ENCODE measurements at regions of chr19 and their contacts with region 1.

Region 1: DNA sequence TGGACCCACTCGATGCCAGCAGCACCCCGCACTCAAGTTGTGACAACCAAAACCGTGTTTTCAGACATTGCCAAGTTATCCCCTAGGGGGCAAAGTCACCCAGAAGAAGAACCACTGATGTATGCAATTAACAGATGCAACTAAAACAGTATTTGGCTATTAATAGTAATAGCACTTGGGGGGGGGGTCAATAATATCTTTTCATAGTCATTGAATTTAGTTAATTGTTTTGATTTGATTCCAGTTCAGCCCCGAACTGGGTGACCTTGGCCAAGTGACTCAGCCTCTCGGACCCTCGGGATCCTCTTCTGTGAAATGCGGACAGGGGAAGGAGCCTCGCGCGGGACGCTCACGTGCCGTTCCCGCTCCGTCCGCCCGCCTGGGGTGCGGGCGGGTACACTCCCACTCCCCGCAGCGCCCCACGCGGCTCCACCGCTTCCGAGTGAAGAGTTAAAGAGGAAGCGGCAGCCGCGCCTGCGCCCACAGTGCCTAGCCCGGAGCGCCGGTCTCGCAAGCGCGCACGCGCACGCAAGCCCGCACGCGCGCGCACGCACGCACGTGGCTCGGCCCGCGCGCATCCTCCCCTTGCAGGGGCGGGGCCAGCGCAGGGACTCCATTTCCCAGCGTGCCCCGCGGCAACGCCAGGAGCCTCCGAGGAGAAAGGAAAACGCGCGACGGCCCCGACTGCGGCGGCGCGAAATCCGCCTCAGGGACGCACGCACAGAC is 449 bp upstream of the DAZAP1 start:
- DNase-seq: peak; percentile 99
- H3K4me3 ChIP-seq: peak overlapping the region; percentile 37 to 99 (median 93)
- H3K27ac ChIP-seq: peak overlapping the region; percentile 79 to 98 (median 92)
- H3K4me1 ChIP-seq: peaks cover 4 to 41% (median 39%) of the 10 kb centered on the region in 4 donors
- H3K27me3 ChIP-seq: peaks cover 0 to 9% (median 0%) of the 10 kb centered on the region in 3 donors
- CTCF ChIP-seq: peak in 3 of 4 experiments; percentile 6 to 45 (median 26)
- EP300 ChIP-seq: peak in 1 of 4 donors; percentile 37
- POLR2A ChIP-seq: no peak

Region 2: DNA sequence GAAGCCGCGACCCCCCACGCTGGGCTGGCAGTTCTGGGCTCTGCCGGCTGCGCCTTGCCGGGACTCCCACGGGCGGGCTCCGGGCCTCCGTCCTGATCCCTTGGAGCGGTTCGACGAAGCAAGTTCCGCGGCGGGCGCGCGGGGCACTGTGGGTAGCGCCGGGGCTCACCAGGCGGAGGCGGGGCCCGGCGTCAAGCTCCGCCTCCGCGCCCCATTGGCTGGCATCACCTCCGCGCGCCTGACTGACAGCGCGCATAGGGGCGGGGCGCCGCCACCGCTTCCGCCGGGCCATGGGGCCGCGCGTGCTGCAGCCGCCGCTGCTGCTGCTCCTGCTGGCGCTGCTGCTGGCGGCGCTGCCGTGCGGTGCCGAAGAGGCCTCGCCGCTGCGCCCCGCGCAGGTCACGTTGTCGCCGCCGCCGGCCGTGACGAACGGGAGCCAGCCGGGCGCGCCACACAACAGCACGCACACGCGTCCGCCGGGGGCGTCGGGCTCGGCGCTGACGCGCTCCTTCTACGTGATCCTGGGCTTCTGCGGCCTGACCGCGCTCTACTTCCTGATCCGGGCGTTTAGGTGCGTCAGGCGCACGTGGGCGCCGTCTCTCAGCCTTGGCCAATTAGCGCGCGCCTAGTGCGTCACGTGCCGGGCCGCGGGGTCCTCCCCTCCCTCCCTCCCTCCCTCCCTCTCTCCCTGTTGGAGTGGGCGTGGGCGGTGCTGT is 131.5 kb before region 1 on chr19 and contains the start of gene FAM174C:
- intact Hi-C with region 1: loop called (anchors 5 kb)
- DNase-seq: peak; percentile 98
- H3K4me3 ChIP-seq: peak within 1 kb of the TSS; percentile 44 to 64 (median 60)
- H3K27ac ChIP-seq: peak within 1 kb of the TSS; percentile 94 to 100 (median 97)
- H3K4me1 ChIP-seq: peaks cover 0 to 62% (median 60%) of the 10 kb centered on the region in 4 donors
- H3K27me3 ChIP-seq: no peaks in the 10 kb centered on the region
- CTCF ChIP-seq: no peak
- EP300 ChIP-seq: peak in 1 of 4 donors; percentile 57
- POLR2A ChIP-seq: peak; percentile 44 to 46
- total RNA-seq, gene FAM174C: 24.7 to 49.3 (median 29.8) TPM

Region 3: GRCh38 chr19:1355568-1356507 is 51.1 kb before region 1 on chr19:
- intact Hi-C with region 1: loop called (anchors 5 kb)
- DNase-seq: no peak
- H3K4me3 ChIP-seq: peak overlapping the region; percentile 67 to 97 (median 89)
- H3K27ac ChIP-seq: peak overlapping the region; percentile 91 to 99 (median 96)
- H3K4me1 ChIP-seq: peaks cover 0 to 38% (median 36%) of the 10 kb centered on the region in 4 donors
- H3K27me3 ChIP-seq: no peaks in the 10 kb centered on the region
- CTCF ChIP-seq: no peak
- EP300 ChIP-seq: no peak
- POLR2A ChIP-seq: no peak

Region 4: GRCh38 chr19:1383311-1384084 is 23.4 kb before region 1 on chr19 and contains the start of gene NDUFS7:
- intact Hi-C with region 1: loop called (anchors 2 kb)
- DNase-seq: peak; percentile 96
- H3K4me3 ChIP-seq: peak within 1 kb of the TSS; percentile 81 to 97 (median 86)
- H3K27ac ChIP-seq: peak within 1 kb of the TSS; percentile 93 to 94 (median 93)
- H3K4me1 ChIP-seq: peaks cover 0 to 43% (median 28%) of the 10 kb centered on the region in 4 donors
- H3K27me3 ChIP-seq: no peaks in the 10 kb centered on the region
- CTCF ChIP-seq: peak in 3 of 4 experiments; percentile 11 to 59 (median 39)
- EP300 ChIP-seq: peak in 1 of 4 donors; percentile 20
- POLR2A ChIP-seq: peak; percentile 53 to 62
- total RNA-seq, gene NDUFS7: 99.4 to 156 (median 128) TPM

Measured in sigmoid colon (tissue), 7 donors.